Activated CD8-positive, alpha-beta T cell treated with anti-CD3 and anti-CD28 coated beads for 36 hours (primary cell): ENCODE measurements at regions of chr13 and their contacts with region 1.

Region 1: GRCh38 chr13:60163478-60164233 is at the start of gene DIAPH3:
- DNase-seq: peak; percentile 97
- ATAC-seq: peak; percentile 99
- H3K4me3 Mint-ChIP-seq: peak within 1 kb of the TSS; percentile 94
- H3K27ac Mint-ChIP-seq: peak within 1 kb of the TSS; percentile 97
- H3K4me1 Mint-ChIP-seq: peaks cover 33% of the 10 kb centered on the region
- H3K27me3 Mint-ChIP-seq: peaks cover 2% of the 10 kb centered on the region
- CTCF ChIP-seq: no peak
- total RNA-seq, gene DIAPH3: 23.0 to 25.4 TPM

Region 2: DNA sequence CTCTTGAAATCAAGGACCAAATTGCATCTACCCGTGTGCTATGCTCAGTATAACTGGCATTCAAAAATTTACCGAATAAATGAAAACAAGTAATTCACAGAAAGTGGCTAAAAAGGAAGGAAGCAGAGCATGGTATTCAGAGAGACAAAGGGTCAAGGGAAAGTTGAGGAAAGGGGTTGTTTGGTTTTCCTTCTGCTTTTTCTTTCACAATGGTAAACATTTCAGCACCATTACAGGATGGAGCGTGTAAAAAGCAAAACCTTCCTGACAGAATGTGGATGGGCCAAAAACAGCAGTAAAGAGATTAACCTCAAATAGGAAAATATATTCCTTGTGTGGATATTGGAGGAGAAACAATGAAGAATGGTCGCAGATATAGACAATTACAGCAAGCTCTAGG is 14.7 kb before region 1 on chr13:
- CTCF ChIA-PET with region 1: no interaction called
- POLR2A ChIA-PET with region 1: interaction called, 12 read pairs
- intact Hi-C with region 1: no loop called
- DNase-seq: no peak
- ATAC-seq: no peak
- H3K4me3 Mint-ChIP-seq: no peak overlapping the region
- H3K27ac Mint-ChIP-seq: no peak overlapping the region
- H3K4me1 Mint-ChIP-seq: no peaks in the 10 kb centered on the region
- H3K27me3 Mint-ChIP-seq: peaks cover 4% of the 10 kb centered on the region
- CTCF ChIP-seq: no peak

Region 3: GRCh38 chr13:60431108-60431700 is 267.5 kb after region 1 on chr13:
- CTCF ChIA-PET with region 1: no interaction called
- POLR2A ChIA-PET with region 1: no interaction called
- intact Hi-C with region 1: loop called (anchors 5 kb)
- DNase-seq: no peak
- ATAC-seq: peak; percentile 88
- H3K4me3 Mint-ChIP-seq: no peak overlapping the region
- H3K27ac Mint-ChIP-seq: no peak overlapping the region
- H3K4me1 Mint-ChIP-seq: peaks cover 22% of the 10 kb centered on the region
- H3K27me3 Mint-ChIP-seq: no peaks in the 10 kb centered on the region
- CTCF ChIP-seq: peak; percentile 88

Region 4: GRCh38 chr13:60838581-60838980 is 674.9 kb after region 1 on chr13:
- CTCF ChIA-PET with region 1: no interaction called
- POLR2A ChIA-PET with region 1: no interaction called
- intact Hi-C with region 1: no loop called
- DNase-seq: no peak
- ATAC-seq: no peak
- H3K4me3 Mint-ChIP-seq: no peak overlapping the region
- H3K27ac Mint-ChIP-seq: no peak overlapping the region
- H3K4me1 Mint-ChIP-seq: no peaks in the 10 kb centered on the region
- H3K27me3 Mint-ChIP-seq: no peaks in the 10 kb centered on the region
- CTCF ChIP-seq: no peak